Sigmoid colon (tissue), 7 donors: ENCODE measurements at regions of chr14 and their contacts with region 1.

Region 1: DNA sequence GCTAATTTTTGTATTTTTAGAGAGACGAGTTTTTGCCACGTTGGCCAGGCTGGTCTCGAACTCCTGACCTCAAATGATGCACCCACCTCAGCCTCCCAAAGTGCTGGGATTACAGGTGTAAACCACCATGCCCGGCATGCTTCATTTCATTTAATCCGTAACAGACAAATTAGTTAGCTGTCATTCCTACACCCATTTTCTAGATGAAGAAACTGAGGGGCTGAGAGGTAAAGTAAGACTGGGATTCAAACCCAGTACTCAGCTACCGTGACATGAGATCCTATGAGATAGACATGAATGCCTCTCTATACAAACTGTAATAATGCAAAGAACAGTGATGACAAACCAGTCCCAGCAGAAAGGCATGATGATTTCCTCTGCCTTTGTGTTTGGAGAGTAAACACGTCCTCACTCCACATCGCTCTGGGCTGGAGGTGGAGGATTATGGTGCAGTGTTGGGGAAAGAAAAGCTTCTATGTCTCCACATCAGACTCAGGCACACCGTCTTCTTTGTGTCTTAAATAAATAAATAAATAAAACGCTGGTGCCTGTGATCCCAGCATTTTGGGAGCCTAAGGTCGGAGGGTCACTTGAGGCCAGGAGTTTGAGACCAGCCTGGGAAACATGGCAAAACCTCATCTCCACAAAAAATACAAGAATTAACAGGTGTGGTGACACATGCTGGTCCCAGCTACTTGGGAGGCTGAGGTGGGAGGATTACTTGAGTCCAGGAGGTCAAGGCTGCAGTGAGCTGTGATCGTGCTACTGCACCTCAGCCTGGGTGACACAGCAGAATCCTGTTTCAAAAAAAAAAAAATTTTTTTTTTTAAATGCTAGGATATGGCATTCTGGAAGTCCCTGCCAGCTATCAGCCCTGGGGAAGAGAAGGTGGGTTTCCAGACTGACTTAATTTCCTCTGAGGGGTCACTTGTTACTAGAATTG is 10.5 kb downstream of the VSX2 start:
- DNase-seq: no peak
- H3K4me3 ChIP-seq: no peak overlapping the region
- H3K27ac ChIP-seq: no peak overlapping the region
- H3K4me1 ChIP-seq: peaks cover 0 to 7% (median 0%) of the 10 kb centered on the region in 4 donors
- H3K27me3 ChIP-seq: peaks cover 2 to 29% (median 14%) of the 10 kb centered on the region in 3 donors
- CTCF ChIP-seq: no peak
- EP300 ChIP-seq: no peak
- POLR2A ChIP-seq: no peak

Region 2: DNA sequence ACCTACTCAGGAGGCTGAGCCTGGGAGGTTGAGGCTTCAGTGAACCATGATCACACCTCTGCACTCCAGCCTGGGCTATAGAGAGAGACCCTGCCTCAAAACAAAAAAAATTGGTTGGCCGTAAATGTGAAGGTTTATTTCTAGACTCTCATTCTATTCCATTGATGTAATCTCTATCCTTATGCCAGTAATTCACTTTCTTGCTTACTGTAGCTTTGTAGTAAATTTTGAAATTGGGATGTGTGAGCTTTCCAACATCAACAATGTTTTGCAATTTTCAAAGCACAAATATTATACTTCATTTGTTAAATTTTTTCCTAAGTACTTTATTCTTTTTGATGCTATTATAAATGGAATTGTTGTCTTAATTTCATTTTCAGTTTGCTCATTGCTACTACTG is 140.3 kb before region 1 on chr14:
- intact Hi-C with region 1: loop called (anchors 2 kb)
- DNase-seq: no peak
- H3K4me3 ChIP-seq: no peak overlapping the region
- H3K27ac ChIP-seq: no peak overlapping the region
- H3K4me1 ChIP-seq: no peaks in the 10 kb centered on the region
- H3K27me3 ChIP-seq: no peaks in the 10 kb centered on the region
- CTCF ChIP-seq: no peak
- EP300 ChIP-seq: no peak
- POLR2A ChIP-seq: no peak

Region 3: DNA sequence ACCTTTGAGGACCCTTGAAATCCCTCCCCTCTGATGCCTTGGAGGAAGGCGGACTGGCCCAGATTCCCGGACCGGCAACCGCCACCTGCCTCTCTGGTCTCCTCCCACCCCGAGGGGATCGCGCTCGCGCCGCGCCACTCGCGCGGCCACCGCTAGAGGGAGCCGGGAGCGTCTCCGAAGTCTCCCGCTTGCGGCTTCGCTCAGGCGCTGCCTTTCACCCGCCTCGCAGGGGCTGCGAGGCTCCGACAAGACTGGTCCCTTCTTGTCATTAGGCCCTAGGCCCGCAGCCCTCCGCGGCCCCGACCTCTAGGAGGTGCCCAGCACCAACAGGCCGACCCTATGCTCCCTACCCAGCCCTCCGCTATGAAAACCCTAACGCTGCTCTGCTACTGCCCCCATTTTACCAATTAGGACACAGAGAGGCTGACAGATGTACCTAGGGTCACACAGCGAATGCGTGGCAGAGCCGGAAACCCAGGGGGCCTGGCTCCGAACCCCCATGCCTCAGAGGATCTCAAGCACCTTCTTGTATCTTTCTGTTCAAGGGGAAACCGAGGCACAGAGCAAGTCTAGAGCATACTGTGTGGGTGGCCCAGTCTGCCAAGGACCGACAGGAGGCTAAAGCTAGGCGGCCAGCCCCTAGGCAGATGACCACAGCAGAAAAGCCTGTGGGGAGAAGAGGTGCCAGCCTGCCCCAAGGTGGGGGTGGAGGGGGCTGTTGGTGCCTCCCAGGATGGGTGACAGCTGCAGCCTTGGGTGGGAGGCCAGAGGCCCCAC is 31.8 kb before region 1 on chr14:
- intact Hi-C with region 1: loop called (anchors 5 kb)
- DNase-seq: peak; percentile 73
- H3K4me3 ChIP-seq: peak overlapping the region in 2 of 4 donors; percentile 21 to 24
- H3K27ac ChIP-seq: no peak overlapping the region
- H3K4me1 ChIP-seq: peaks cover 0 to 11% (median 7%) of the 10 kb centered on the region in 4 donors
- H3K27me3 ChIP-seq: peaks cover 13 to 47% (median 16%) of the 10 kb centered on the region in 3 donors
- CTCF ChIP-seq: peak; percentile 42 to 93 (median 66)
- EP300 ChIP-seq: no peak
- POLR2A ChIP-seq: no peak